Activated CD4-positive, alpha-beta T cell treated with anti-CD3 and anti-CD28 coated beads, Interleukin-2, amount 10 ng/mL, durations not matched to agents 24 days and 14 days (primary cell): ENCODE measurements at regions of chr19 and their contacts with region 1.

Region 1: GRCh38 chr19:58558623-58559274 is 338 bp upstream of the UBE2M start:
- DNase-seq: peak; percentile 100
- H3K4me3 Mint-ChIP-seq: peak overlapping the region; percentile 96
- H3K27ac Mint-ChIP-seq: peak overlapping the region; percentile 98
- H3K4me1 Mint-ChIP-seq: peaks cover 64% of the 10 kb centered on the region
- H3K27me3 Mint-ChIP-seq: no peaks in the 10 kb centered on the region

Region 2: GRCh38 chr19:58513694-58514563 is 44.8 kb before region 1 on chr19:
- intact Hi-C with region 1: loop called (anchors 1 kb)
- DNase-seq: peak; percentile 99
- H3K4me3 Mint-ChIP-seq: peak overlapping the region; percentile 91
- H3K27ac Mint-ChIP-seq: peak overlapping the region; percentile 93
- H3K4me1 Mint-ChIP-seq: peaks cover 32% of the 10 kb centered on the region
- H3K27me3 Mint-ChIP-seq: no peaks in the 10 kb centered on the region

Region 3: DNA sequence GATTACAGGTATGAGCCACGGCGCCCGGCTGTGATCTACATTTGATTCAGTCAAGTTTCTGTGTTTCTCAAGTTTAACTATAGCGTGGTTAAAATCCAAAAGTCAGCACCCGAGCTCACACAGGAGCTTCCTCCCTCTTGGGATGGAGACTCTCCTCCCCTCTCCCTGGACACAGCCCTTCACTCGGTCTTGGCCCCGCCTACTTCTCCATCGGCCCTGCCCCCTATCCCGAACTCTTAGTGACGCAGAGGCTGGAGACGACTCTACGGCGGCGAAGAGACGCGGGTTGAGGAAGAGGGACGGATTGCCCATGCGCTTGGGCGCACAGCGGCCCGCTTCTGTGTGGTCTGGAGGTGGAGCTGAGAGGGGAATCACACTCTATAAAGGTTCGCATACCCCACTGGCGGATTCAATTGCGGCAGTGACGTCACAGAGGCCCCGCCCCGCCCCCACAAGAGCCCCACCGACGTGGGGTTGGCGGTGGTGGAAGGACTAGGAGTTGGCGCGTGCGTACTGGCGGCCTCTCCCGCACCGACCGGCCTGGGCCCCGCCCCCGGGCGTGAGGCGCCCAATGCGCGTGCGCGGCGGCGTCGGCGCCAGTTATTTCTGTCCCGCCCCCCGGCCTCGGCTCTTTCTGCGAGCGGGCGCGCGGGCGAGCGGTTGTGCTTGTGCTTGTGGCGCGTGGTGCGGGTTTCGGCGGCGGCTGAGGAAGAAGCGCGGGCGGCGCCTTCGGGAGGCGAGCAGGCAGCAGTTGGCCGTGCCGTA is 14.7 kb before region 1 on chr19 and contains the start of gene TRIM28:
- intact Hi-C with region 1: loop called (anchors 1 kb)
- DNase-seq: peak; percentile 100
- H3K4me3 Mint-ChIP-seq: peak within 1 kb of the TSS; percentile 94
- H3K27ac Mint-ChIP-seq: peak within 1 kb of the TSS; percentile 99
- H3K4me1 Mint-ChIP-seq: peaks cover 29% of the 10 kb centered on the region
- H3K27me3 Mint-ChIP-seq: peaks cover 23% of the 10 kb centered on the region
- total RNA-seq, gene TRIM28: 689 and 698 TPM in 2 replicates

Region 4: GRCh38 chr19:58572818-58573657 is 14.3 kb after region 1 on chr19 and contains the start of gene MZF1:
- intact Hi-C with region 1: loop called (anchors 1 kb)
- DNase-seq: peak; percentile 100
- H3K4me3 Mint-ChIP-seq: peak within 1 kb of the TSS; percentile 95
- H3K27ac Mint-ChIP-seq: peak within 1 kb of the TSS; percentile 99
- H3K4me1 Mint-ChIP-seq: peaks cover 37% of the 10 kb centered on the region
- H3K27me3 Mint-ChIP-seq: peaks cover 3% of the 10 kb centered on the region
- total RNA-seq, gene MZF1: 21.6 and 23.7 TPM in 2 replicates

Region 5: DNA sequence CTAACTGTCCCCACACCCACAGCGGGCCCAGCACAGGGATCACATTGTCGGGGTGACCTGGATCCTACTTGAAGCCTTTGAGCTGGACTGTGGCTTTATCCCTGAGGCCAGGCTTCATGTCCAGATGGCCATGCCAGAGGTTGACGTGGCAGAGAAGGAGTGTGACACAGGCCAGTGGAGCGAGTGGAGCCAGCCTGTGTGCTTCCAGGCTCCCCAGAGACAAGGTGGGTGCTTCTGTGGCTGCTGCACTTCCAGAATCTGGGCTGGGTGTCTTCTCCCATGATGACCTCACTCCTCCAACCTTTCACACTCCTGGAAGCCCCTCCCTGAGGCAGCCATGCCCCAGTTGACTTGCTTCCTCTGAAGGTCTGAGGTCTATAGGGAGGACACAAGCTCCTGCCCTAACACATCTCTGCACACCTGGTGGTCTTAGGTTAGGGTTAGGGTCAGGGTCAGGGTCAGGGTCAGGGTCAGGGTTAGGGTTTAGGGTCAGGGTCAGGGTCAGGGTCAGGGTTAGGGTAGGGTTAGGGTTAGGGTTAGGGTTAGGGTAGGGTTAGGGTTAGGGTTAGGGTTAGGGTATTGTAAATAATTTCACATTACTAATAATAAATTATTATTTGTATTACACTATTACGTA is 27.5 kb after region 1 on chr19:
- intact Hi-C with region 1: no loop called
- DNase-seq: no peak
- H3K4me3 Mint-ChIP-seq: no peak overlapping the region
- H3K27ac Mint-ChIP-seq: no peak overlapping the region
- H3K4me1 Mint-ChIP-seq: peaks cover 2% of the 10 kb centered on the region
- H3K27me3 Mint-ChIP-seq: no peaks in the 10 kb centered on the region